ENCODE measurements at regions of chr10 and their contacts with region 1.

Region 1: DNA sequence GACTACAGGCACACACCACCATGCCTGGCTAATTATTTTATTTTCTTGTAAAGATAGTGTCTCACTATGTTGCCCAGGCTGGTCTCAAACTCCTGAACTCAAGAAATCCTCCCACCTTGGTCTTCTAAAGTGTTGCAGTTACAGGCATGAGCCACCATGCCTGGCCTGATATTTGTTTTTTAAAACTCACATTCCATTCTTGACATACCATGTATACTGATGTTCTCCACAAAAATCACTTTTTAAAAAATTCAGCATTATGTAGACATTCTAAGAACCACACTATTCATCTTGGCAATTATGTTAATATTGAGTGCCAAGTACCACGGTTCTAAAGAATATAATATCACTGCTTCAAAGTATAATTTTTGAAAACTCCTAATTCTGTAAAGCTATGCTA is 43.5 kb downstream of the IDE start:
- DNase-seq: no peak
- ATAC-seq: no peak
- H3K4me3 ChIP-seq: no peak overlapping the region
- H3K27ac ChIP-seq: no peak overlapping the region
- H3K4me1 ChIP-seq: no peaks in the 10 kb centered on the region
- H3K27me3 ChIP-seq: no peaks in the 10 kb centered on the region
- CTCF ChIP-seq: no peak

Region 2: DNA sequence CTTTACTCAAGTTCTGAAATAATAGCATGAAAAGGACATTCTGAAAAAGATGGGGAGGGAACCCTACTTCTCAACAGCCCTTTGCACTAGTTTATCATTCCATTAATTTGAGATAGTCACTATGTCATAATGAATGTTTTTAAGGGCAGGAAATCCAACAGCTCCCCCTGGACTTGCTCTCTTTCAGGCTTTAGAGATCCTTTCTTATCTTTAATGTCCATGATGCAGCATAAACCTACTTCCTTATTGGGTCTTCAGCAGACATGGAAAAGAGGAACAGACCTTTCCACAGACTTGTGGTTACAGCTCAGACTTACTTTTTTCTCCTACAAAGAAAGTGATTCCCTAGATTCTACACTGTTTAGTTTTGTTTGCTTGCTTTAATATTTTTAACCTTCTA is 43.8 kb before region 1 on chr10:
- CTCF ChIA-PET with region 1: no interaction called
- POLR2A ChIA-PET with region 1: no interaction called
- intact Hi-C with region 1: no loop called
- DNase-seq: no peak
- ATAC-seq: no peak
- H3K4me3 ChIP-seq: no peak overlapping the region
- H3K27ac ChIP-seq: no peak overlapping the region
- H3K4me1 ChIP-seq: peaks cover 5% of the 10 kb centered on the region
- H3K27me3 ChIP-seq: no peaks in the 10 kb centered on the region
- CTCF ChIP-seq: no peak

Region 3: DNA sequence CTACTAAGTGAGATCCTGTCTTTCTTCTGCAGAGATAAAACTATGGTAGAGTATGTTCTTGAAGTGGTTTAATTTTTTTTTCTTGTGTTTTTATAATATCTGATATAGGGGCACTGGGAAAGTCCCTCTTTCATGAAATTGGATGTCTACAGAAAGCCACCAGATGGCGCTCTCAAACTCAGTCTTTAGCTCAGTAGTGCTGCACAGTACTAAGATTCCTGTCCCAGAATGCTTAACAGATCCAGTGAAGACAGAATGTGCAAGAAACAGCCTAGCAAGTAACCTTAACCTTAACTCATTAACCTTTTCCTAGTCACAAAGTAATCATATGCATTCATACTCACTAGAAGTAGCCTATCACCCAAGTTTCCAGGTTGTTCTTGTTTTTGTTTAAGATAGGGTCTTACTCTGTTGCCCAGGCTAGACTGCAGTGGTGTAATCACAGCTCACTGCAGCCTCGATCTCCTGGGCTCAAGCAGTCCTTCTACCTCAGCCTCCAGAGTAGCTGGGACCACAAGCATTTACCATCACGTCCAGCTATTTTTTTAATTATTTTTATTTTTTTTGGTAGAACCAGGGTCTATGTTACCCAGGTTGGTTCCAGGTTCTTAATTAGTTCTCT is 13.3 kb before region 1 on chr10:
- CTCF ChIA-PET with region 1: no interaction called
- POLR2A ChIA-PET with region 1: no interaction called
- intact Hi-C with region 1: loop called (anchors 1 kb)
- DNase-seq: peak; percentile 72
- ATAC-seq: peak; percentile 92
- H3K4me3 ChIP-seq: no peak overlapping the region
- H3K27ac ChIP-seq: no peak overlapping the region
- H3K4me1 ChIP-seq: no peaks in the 10 kb centered on the region
- H3K27me3 ChIP-seq: no peaks in the 10 kb centered on the region
- CTCF ChIP-seq: peak; percentile 83